ENCODE measurements at regions of chr22 and their contacts with region 1.

Region 1: DNA sequence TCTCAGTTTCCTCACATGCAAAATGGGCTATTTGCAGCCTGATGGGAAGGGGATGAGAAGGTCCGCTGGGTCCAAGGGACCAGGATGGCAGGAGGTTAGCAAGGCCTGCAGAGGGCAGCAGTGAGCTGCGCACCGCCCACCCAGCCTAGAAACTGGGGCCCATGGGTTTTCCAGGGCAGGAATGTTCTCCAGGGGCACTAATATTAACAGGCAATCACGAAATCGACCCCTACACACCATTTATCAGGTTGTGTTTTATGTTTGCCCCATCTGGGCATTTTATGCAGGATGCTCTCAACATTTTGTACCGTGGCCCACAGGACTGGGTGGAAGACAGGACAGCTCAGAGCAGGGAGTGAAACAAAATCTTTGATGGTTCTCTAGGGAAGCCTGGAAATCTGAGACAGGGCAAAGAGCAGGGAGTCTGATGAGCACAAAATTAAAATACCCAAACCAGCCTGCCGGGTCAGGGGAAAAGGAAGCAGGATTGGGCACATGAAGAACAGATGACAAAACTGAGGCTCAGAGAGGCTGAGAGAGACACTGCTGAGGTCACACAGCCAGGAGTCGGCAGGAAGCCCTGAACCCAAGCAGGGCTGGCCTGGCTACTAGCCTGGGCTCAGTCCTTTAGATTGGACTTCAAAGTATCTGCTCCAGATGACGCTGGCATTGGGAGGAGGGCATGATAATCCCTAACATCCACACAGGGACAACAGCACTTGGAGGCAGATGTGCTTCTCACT is 1.6 kb upstream of the BCR start:
- DNase-seq: peak; percentile 78
- ATAC-seq: no peak
- H3K4me3 ChIP-seq: no peak overlapping the region
- H3K4me3 Mint-ChIP-seq: peak overlapping the region; percentile 83
- H3K27ac ChIP-seq: no peak overlapping the region
- H3K27ac Mint-ChIP-seq: peak overlapping the region; percentile 67
- H3K4me1 ChIP-seq: peaks cover 41 to 58% of the 10 kb centered on the region in 2 donors
- H3K4me1 Mint-ChIP-seq: peaks cover 48% of the 10 kb centered on the region
- H3K27me3 ChIP-seq: peaks cover 0 to 11% (median 3%) of the 10 kb centered on the region in 4 experiments
- H3K27me3 Mint-ChIP-seq: peaks cover 7% of the 10 kb centered on the region
- CTCF ChIP-seq: peak; percentile 97

Region 2: GRCh38 chr22:23128269-23129108 is 50.2 kb before region 1 on chr22:
- CTCF ChIA-PET with region 1: interaction called, 19 read pairs
- POLR2A ChIA-PET with region 1: no interaction called
- intact Hi-C with region 1: no loop called
- DNase-seq: peak; percentile 84
- ATAC-seq: peak; percentile 94
- H3K4me3 ChIP-seq: no peak overlapping the region
- H3K4me3 Mint-ChIP-seq: no peak overlapping the region
- H3K27ac ChIP-seq: no peak overlapping the region
- H3K27ac Mint-ChIP-seq: peak overlapping the region; percentile 18
- H3K4me1 ChIP-seq: no peaks in the 10 kb centered on the region
- H3K4me1 Mint-ChIP-seq: peaks cover 4% of the 10 kb centered on the region
- H3K27me3 ChIP-seq: no peaks in the 10 kb centered on the region
- H3K27me3 Mint-ChIP-seq: no peaks in the 10 kb centered on the region
- CTCF ChIP-seq: peak; percentile 90

Region 3: DNA sequence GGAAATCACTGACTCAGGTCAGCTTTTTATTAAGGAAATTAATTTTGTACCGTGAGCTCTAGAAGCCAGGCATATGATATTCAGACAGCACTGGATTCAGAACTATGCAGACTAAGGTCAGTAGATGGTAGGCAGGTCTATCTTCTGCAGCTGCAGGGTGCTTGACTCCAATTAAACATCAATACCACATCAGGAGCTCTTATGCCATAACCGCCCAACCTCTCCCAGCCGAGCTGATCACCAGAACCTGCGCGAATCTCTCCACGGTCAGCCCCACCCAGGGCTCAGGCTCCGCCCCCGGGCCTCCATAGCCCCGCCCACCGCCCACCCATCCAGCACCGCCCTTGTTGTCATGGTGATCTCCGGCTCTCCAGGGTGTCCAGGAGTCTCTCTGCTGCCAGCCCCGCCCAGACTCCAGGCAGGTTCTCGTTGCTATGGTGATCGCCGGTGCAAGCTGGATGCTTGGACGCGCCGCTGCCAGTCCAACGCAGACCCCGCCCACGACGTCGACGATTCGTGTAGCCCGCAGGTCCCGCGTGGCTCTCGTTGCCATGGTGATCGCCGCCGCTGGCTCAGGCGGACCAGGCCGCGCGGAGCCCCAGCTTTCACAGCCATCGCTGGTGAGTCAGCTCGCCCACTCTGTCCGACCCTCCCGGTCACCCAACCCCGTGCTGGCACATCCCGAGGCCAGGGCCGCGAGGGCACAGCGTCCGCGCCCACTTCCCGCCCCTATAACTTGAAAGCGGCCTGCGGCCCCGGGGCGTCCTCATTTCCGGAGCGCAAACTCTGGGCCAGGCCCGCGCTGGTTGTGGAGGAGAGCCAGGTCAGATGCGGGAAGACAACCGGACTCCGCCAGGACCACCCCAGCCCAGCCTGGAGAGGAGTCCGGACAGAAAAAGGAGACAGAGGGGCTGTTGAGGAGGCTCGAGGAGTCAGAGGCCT is 33.5 kb before region 1 on chr22 and contains the start of gene RAB36:
- CTCF ChIA-PET with region 1: interaction called, 10 read pairs
- POLR2A ChIA-PET with region 1: interaction called, 3 read pairs
- intact Hi-C with region 1: loop called (anchors 5 kb)
- DNase-seq: peak; percentile 99
- ATAC-seq: peak; percentile 60
- H3K4me3 ChIP-seq: peak within 1 kb of the TSS; percentile 16 to 52 (median 43)
- H3K4me3 Mint-ChIP-seq: peak within 1 kb of the TSS; percentile 89
- H3K27ac ChIP-seq: peak within 1 kb of the TSS; percentile 65 to 83
- H3K27ac Mint-ChIP-seq: peak within 1 kb of the TSS; percentile 96
- H3K4me1 ChIP-seq: peaks cover 41 to 58% of the 10 kb centered on the region in 2 donors
- H3K4me1 Mint-ChIP-seq: peaks cover 44% of the 10 kb centered on the region
- H3K27me3 ChIP-seq: no peaks in the 10 kb centered on the region
- H3K27me3 Mint-ChIP-seq: no peaks in the 10 kb centered on the region
- CTCF ChIP-seq: no peak
- total RNA-seq, gene RAB36: 1.9 and 3.3 TPM in 2 replicates

Region 4: GRCh38 chr22:23240639-23241389 is 62.1 kb after region 1 on chr22:
- CTCF ChIA-PET with region 1: interaction called, 13 read pairs
- POLR2A ChIA-PET with region 1: interaction called, 3 read pairs
- intact Hi-C with region 1: loop called (anchors 2 kb)
- DNase-seq: peak; percentile 45
- ATAC-seq: peak; percentile 51
- H3K4me3 ChIP-seq: no peak overlapping the region
- H3K4me3 Mint-ChIP-seq: peak overlapping the region; percentile 5
- H3K27ac ChIP-seq: peak overlapping the region in 1 of 2 donors; percentile 7
- H3K27ac Mint-ChIP-seq: peak overlapping the region; percentile 4
- H3K4me1 ChIP-seq: peaks cover 27 to 41% of the 10 kb centered on the region in 2 donors
- H3K4me1 Mint-ChIP-seq: peaks cover 40% of the 10 kb centered on the region
- H3K27me3 ChIP-seq: no peaks in the 10 kb centered on the region
- H3K27me3 Mint-ChIP-seq: no peaks in the 10 kb centered on the region
- CTCF ChIP-seq: no peak

Region 5: DNA sequence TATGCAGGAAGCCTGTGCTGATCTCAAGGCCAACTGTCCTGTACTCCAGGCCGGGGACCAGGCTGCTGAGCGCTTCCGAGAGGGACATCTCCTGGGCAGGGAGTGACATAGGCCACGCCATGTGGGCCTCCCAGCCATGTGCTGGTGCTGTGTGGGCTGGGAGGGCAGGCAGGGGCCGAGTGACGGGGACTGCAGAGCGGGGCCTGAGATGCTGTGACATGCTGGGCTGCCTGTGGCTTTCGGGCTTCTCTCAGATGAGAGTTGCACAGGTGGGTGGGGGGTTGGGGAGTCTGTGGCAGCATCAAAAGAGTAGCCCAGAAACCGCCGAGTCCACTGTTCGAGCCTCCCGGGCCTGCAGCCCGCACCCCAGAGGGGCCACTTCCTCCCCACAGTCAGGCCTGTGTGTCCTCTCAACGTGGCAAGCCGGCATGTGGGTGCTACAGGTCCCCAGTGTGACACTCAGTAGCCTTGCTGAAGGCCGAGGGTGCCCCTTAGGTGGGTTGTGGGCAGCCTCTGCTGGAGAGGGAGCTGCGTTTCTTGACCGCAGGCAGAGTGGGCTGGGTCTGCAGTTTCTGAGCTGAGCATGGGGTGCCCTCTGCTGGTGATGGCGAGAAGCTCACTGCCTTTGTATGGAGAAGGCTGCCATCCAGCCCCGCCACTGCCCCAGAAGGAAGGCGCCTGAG is 102.9 kb after region 1 on chr22:
- CTCF ChIA-PET with region 1: interaction called, 494 read pairs
- POLR2A ChIA-PET with region 1: interaction called, 6 read pairs
- intact Hi-C with region 1: loop called (anchors 1 kb)
- DNase-seq: peak; percentile 87
- ATAC-seq: peak; percentile 75
- H3K4me3 ChIP-seq: no peak overlapping the region
- H3K4me3 Mint-ChIP-seq: no peak overlapping the region
- H3K27ac ChIP-seq: no peak overlapping the region
- H3K27ac Mint-ChIP-seq: no peak overlapping the region
- H3K4me1 ChIP-seq: peaks cover 14 to 22% of the 10 kb centered on the region in 2 donors
- H3K4me1 Mint-ChIP-seq: peaks cover 23% of the 10 kb centered on the region
- H3K27me3 ChIP-seq: no peaks in the 10 kb centered on the region
- H3K27me3 Mint-ChIP-seq: no peaks in the 10 kb centered on the region
- CTCF ChIP-seq: peak; percentile 89

Region 6: GRCh38 chr22:23385291-23386244 is 206.9 kb after region 1 on chr22:
- CTCF ChIA-PET with region 1: interaction called, 20 read pairs
- POLR2A ChIA-PET with region 1: no interaction called
- intact Hi-C with region 1: loop called (anchors 5 kb)
- DNase-seq: peak; percentile 87
- ATAC-seq: peak; percentile 92
- H3K4me3 ChIP-seq: no peak overlapping the region
- H3K4me3 Mint-ChIP-seq: no peak overlapping the region
- H3K27ac ChIP-seq: no peak overlapping the region
- H3K27ac Mint-ChIP-seq: no peak overlapping the region
- H3K4me1 ChIP-seq: peaks cover 0 to 3% of the 10 kb centered on the region in 2 donors
- H3K4me1 Mint-ChIP-seq: no peaks in the 10 kb centered on the region
- H3K27me3 ChIP-seq: peaks cover 0 to 22% (median 5%) of the 10 kb centered on the region in 4 experiments
- H3K27me3 Mint-ChIP-seq: peaks cover 12% of the 10 kb centered on the region
- CTCF ChIP-seq: peak; percentile 98

Measured in B cell (primary cell).